ENCODE measurements at regions of chr10 and their contacts with region 1.

Region 1: GRCh38 chr10:6009150-6009549 is 31.8 kb upstream of the IL15RA start:
- DNase-seq: no peak
- H3K4me3 Mint-ChIP-seq: no peak overlapping the region
- H3K27ac Mint-ChIP-seq: peak overlapping the region; percentile 38
- H3K4me1 Mint-ChIP-seq: peaks cover 43% of the 10 kb centered on the region
- H3K27me3 Mint-ChIP-seq: peaks cover 2% of the 10 kb centered on the region

Region 2: DNA sequence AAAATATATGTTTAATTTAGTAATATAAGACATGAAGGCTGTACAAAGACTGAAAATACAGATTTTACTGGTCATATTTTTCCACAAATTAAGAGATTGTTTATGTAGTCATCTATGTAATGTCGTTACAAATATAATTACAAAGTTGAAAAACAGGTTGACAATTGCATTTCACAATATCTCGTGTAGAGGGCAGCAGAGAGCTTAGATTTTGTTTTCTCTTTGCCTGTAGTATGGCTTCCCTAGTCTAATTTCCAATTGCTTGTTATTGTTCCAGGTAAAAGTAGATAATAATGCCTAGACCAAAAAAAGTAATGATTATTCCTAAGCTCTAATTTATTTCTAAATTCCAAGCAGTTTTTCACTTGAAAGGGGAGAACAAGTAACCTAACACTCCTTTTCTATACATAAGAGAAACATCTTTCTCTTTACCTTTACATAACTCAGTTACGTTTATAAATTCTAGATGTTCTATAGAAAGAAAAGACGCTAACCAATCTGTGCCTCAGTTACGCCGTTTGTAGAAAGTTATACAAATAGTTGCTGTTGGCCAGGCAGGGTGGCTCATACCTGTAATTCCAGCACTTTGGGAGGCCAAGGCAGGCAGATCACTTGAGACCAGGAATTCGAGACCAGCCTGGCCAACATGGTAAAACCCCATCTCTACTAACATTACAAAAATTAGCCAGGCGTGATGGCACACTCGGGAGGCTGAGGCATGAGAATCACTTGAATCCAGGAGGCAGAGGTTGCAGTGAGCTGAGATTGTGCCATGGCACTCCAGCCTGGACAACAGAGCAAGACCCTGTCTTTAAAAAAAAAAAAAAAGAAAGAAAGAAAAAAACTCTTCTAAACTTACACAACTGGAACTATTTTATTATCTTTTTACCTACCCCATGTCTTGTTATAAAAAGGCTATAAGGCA is 566.8 kb before region 1 on chr10:
- intact Hi-C with region 1: no loop called
- DNase-seq: peak; percentile 27
- H3K4me3 Mint-ChIP-seq: peak overlapping the region; percentile 16
- H3K27ac Mint-ChIP-seq: no peak overlapping the region
- H3K4me1 Mint-ChIP-seq: peaks cover 53% of the 10 kb centered on the region
- H3K27me3 Mint-ChIP-seq: no peaks in the 10 kb centered on the region

Region 3: DNA sequence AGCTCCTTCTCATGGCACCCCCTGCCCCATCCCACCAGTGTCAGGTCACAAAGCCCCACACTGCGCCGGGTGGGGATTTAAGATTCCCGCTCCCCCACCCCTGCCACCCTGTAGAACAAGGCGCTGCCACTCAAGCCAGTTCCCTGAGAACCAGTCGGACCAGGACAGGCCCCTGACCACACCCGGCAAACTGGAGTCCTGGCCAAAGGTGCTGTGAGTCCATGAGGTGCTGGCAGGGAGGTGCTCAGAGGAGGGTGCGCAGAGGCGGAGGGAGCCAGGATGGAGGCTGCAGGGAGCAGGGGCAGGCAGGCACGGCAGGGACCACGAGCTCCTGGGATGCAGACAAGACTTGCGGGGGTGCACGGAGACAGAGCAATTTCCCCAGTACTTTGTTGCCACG is 176.2 kb before region 1 on chr10:
- intact Hi-C with region 1: no loop called
- DNase-seq: no peak
- H3K4me3 Mint-ChIP-seq: no peak overlapping the region
- H3K27ac Mint-ChIP-seq: no peak overlapping the region
- H3K4me1 Mint-ChIP-seq: no peaks in the 10 kb centered on the region
- H3K27me3 Mint-ChIP-seq: peaks cover 2% of the 10 kb centered on the region

Region 4: DNA sequence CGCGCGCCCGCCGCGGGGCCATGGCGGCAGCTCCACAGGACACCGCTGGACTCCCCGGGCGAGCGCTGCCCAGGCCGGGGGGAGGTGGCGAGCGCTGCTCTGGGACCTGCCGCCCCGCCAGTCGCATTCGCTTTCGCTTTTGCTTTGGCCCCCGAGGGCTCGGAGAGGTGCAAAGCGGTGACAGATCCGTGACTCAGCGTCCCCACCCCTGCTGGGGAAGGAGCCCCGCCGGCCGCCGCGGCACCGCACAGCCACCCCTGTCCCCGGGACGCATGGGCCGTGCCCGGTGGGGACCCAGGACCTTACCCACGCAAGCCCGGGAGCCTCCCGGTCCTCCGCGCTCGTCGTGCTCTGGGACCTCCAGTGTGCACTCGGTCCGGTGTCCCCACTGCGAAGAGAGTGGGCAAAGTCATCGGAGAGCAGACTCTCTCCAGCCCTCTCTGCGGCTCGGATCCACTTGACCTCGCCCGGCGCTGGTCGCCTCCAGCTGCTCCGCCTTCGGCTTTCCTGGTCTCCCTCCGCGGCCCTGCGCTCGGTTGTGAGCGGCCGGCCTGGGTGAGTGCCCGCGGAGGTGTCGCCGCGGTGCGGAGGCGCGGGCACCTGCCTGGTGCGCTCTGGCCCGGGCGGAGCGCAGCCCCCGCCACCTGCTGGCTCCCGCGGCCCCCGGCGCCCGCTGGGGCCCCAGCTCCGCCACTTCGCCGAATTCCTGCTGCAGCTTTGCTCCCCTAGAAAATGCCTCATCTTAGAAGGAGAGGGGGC is 31.5 kb before region 1 on chr10 and contains the start of gene IL15RA:
- intact Hi-C with region 1: loop called (anchors 1 kb)
- DNase-seq: peak; percentile 88
- H3K4me3 Mint-ChIP-seq: peak within 1 kb of the TSS; percentile 93
- H3K27ac Mint-ChIP-seq: peak within 1 kb of the TSS; percentile 90
- H3K4me1 Mint-ChIP-seq: peaks cover 31% of the 10 kb centered on the region
- H3K27me3 Mint-ChIP-seq: peaks cover 3% of the 10 kb centered on the region
- total RNA-seq, gene IL15RA: 23.4 and 24.4 TPM in 2 replicates

Region 5: DNA sequence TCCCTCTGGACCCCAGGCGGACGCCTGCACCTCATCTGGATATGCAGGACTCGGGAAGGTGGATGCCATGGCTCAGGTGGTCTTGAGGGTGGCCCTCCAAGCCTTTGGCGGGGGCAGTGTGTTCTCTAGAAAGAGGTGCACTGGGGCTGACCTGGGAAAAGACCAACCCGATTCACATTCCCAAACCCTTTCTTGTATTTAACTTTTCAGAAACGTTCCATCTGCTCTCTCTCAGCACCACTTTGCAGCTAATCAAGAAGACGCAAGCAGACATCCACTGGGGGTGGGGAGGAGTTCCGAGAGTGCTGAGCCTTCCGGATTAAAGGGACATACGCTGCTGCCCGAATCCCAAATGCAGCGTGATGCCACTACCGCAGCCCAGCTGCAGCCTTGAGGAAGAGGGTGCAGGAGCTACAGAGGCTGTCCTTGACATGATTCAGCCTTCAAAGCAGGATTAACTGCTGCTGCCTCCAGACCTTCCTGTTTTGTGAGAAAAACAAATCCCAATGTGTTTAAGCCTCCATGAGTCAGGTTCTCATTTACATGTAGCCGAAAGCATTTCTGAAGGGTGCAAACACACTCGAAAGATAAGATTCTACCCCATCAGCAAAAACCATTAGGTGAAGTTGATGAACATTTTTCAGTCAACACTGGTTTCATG is 119.6 kb after region 1 on chr10:
- intact Hi-C with region 1: no loop called
- DNase-seq: no peak
- H3K4me3 Mint-ChIP-seq: peak overlapping the region; percentile 67
- H3K27ac Mint-ChIP-seq: peak overlapping the region; percentile 92
- H3K4me1 Mint-ChIP-seq: peaks cover 40% of the 10 kb centered on the region
- H3K27me3 Mint-ChIP-seq: no peaks in the 10 kb centered on the region

Measured in activated T-helper 1 cell treated with anti-CD3 and anti-CD28 coated beads, Interleukin-12 subunit alpha, Interleukin-12 subunit beta, Interleukin-2, Interleukin-4 antibody, amounts not matched to agents 30 ng/mL and 10 ng/mL and 1 ng/mL, durations not matched to agents 14 hours and 24 hours and 36 hours (primary cell).